ENCODE measurements at regions of chr2 and their contacts with region 1.

Region 1: GRCh38 chr2:56615760-56616159 is 432.0 kb downstream of the CCDC85A start:
- DNase-seq: no peak
- H3K4me3 ChIP-seq: no peak overlapping the region
- CTCF ChIP-seq: no peak

Region 2: GRCh38 chr2:56376699-56377665 is 238.8 kb before region 1 on chr2:
- in situ Hi-C with region 1: no loop called
- DNase-seq: no peak
- H3K4me3 ChIP-seq: no peak overlapping the region
- CTCF ChIP-seq: no peak

Region 3: DNA sequence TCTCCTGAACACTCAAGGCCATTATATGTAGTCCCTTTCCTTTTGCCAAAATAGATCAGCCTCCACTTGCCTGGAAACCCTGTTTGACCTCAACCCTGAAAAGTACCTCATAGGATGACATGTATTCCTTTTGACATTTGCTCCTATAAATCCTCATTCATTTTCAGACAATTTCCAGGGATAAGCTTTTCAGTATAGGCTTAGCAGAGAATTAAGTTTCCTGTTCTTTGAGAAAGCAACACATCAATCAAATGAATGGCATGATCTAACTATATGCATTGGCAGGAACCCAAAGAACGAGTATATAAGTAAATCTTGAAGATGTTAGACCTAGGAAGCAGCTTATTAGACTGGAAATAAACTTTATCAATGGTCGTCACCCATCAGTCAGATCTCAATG is 51.0 kb after region 1 on chr2:
- in situ Hi-C with region 1: loop called (anchors 5 kb)
- DNase-seq: no peak
- H3K4me3 ChIP-seq: no peak overlapping the region
- CTCF ChIP-seq: no peak